Activated CD8-positive, alpha-beta T cell treated with anti-CD3 and anti-CD28 coated beads for 36 hours (primary cell): ENCODE measurements at regions of chr2 and their contacts with region 1.

Region 1: DNA sequence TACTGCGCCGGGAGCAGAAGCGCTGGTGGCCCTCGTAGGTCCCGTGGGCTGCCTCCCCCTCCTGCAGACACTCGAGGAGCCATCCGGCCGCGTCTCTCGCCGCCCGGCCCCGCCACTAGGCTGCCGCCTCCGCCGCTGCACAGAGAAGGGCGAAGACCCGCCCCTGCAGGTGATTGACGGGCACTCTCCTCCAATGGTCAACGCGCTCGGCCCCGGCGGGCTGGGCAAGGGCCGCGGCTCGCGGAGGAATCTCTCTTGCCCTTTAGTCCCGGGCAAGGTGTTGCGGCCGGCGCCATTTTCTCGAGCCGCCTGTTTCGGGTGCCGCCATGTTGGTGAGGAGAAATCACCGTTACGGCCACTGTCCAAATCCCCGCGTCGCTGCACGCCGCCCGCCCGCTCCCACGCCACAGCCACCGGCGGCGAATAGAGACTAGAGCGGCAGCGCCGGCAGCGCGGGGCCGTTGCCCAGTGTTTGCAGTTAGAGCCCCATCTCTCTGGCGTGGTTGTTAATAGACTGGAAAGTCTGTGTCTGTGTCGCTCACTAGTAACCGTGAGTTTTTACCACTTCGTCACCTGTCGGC is at the start of gene ZC3H6:
- DNase-seq: peak; percentile 99
- ATAC-seq: peak; percentile 98
- H3K4me3 Mint-ChIP-seq: peak within 1 kb of the TSS; percentile 88
- H3K27ac Mint-ChIP-seq: peak within 1 kb of the TSS; percentile 98
- H3K4me1 Mint-ChIP-seq: peaks cover 20% of the 10 kb centered on the region
- H3K27me3 Mint-ChIP-seq: no peaks in the 10 kb centered on the region
- CTCF ChIP-seq: no peak
- total RNA-seq, gene ZC3H6: 16.9 to 17.6 TPM

Region 2: GRCh38 chr2:111897924-111898702 is 377.3 kb before region 1 on chr2 and contains the start of gene MERTK:
- CTCF ChIA-PET with region 1: no interaction called
- POLR2A ChIA-PET with region 1: no interaction called
- intact Hi-C with region 1: no loop called
- DNase-seq: peak; percentile 64
- ATAC-seq: peak; percentile 92
- H3K4me3 Mint-ChIP-seq: peak within 1 kb of the TSS; percentile 77
- H3K27ac Mint-ChIP-seq: no peak within 1 kb of the TSS
- H3K4me1 Mint-ChIP-seq: peaks cover 11% of the 10 kb centered on the region
- H3K27me3 Mint-ChIP-seq: peaks cover 45% of the 10 kb centered on the region
- CTCF ChIP-seq: peak; percentile 49
- total RNA-seq, gene MERTK: 0.43 to 0.70 TPM

Region 3: DNA sequence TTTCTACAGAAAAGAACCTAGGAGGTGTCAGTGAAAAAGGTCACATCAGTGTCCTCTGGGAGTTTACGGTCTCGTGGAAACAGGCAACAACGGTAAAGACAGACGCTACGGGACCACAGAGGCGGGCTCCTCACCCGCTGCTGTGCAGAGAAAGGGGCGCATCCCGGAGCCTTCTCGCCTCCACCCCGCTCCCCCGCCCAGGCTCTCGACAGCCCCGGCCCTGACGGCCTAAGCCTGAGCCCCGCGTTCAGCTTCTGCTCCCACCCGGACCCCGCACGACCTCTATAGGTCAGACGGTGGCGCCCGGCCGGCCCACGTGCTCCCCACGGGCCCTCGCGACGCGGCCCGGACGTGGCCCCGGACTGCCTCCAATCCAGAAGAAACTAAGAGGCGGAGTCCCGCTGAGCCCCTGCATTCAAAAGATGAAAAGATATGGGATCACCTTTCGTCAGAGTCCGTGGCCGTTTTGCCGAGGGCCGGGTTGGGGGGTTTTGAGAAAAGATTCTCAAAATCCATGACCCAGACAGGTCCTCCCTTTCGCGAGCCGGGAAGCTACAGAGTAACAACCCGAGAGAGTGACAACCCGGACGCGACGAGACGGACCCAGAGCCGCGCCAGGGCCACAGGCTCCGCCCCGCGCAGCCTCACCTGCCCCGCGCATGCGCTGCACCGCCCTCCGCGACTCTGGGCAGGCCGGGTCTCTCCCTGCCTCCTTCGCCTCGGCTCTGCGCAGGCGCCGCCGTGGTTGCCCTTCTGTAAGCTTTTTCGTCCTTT is 20.7 kb before region 1 on chr2 and contains the start of gene ZC3H8:
- CTCF ChIA-PET with region 1: interaction called, 11 read pairs
- POLR2A ChIA-PET with region 1: interaction called, 14 read pairs
- intact Hi-C with region 1: no loop called
- DNase-seq: peak; percentile 96
- ATAC-seq: peak; percentile 94
- H3K4me3 Mint-ChIP-seq: no peak within 1 kb of the TSS
- H3K27ac Mint-ChIP-seq: peak within 1 kb of the TSS; percentile 93
- H3K4me1 Mint-ChIP-seq: peaks cover 31% of the 10 kb centered on the region
- H3K27me3 Mint-ChIP-seq: no peaks in the 10 kb centered on the region
- CTCF ChIP-seq: no peak
- total RNA-seq, gene ZC3H8: 16.7 to 22.1 TPM

Region 4: DNA sequence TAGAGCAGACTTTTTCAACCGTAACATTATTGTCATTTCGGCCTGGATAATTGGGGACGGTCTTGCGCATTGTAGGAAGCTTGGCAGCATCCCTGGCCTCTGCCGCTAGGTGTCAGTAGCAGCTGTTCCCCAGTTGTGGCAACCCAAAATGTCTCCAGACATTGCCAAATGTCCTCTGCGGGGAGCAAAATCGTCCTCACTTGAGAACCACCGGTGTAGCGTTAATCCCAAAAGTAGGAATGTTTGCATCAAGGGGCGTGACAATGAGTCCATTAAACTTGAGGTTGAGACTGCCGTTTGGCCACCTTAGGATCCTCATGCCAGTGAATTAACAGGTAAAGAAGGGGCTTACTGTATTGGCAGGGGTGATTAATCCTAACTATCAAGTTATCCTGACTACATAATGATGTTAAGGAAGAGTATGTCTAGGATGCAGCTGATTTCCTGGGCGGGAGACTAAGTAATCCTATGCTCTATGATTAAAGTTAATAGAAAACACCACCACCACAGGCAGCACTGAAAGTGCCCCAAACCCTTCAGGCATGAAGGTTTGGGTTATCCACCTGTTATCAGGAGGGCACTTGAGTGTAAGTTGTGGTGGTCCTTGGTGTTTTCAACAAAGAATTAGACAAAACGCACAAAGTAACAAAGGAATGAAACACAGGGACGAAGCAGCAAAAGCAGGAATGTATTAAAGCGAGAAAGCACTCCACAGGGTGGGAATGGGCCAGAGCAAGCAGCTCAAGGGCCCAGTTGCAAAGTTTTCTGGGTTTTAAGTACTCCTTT is 15.7 kb before region 1 on chr2:
- CTCF ChIA-PET with region 1: interaction called, 11 read pairs
- POLR2A ChIA-PET with region 1: interaction called, 14 read pairs
- intact Hi-C with region 1: no loop called
- DNase-seq: peak; percentile 92
- ATAC-seq: peak; percentile 48
- H3K4me3 Mint-ChIP-seq: peak overlapping the region; percentile 55
- H3K27ac Mint-ChIP-seq: peak overlapping the region; percentile 58
- H3K4me1 Mint-ChIP-seq: peaks cover 21% of the 10 kb centered on the region
- H3K27me3 Mint-ChIP-seq: peaks cover 1% of the 10 kb centered on the region
- CTCF ChIP-seq: peak; percentile 92

Region 5: DNA sequence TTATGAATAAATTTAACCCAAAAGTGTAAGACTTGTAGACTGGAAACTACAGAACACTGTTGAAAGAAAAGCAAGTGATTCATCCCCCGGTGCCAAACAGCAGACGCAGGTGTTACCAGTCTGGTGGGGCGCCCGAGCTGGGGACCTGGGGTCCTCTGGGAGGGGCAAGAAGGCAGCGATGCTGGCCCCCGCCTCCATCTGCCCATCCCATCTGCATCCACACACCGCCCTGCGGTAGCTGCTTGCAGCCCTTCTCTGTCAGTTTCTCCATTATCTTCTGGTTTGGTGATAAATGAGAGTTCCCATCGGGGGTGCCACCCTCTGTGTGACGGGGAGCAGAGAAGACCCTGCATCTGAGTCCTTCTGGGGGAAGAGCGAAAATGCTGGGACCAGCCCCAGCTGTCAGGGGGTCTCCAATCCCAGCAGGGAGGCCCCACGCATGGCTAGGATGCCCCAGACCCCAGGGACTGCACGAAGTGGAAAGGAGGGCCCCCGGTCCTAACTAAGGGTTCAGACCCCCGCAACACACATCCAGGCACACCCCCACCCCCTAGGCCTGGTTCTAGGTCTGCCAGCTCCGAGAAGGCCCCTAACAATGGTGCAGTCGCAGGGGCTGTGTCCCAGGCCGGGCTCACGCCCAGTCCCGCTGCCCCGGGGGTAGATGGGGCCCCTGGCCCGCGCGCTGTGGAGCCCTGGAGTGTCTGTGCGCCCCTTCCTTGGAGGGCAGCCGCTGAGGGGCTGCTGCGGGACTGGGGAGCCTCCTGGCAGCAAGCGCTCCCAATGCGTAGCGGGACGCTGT is 158.7 kb after region 1 on chr2:
- CTCF ChIA-PET with region 1: no interaction called
- POLR2A ChIA-PET with region 1: no interaction called
- intact Hi-C with region 1: loop called (anchors 5 kb)
- DNase-seq: peak; percentile 4
- ATAC-seq: no peak
- H3K4me3 Mint-ChIP-seq: no peak overlapping the region
- H3K27ac Mint-ChIP-seq: no peak overlapping the region
- H3K4me1 Mint-ChIP-seq: peaks cover 13% of the 10 kb centered on the region
- H3K27me3 Mint-ChIP-seq: peaks cover 3% of the 10 kb centered on the region
- CTCF ChIP-seq: no peak

Region 6: GRCh38 chr2:112584134-112584890 is 308.9 kb after region 1 on chr2 and contains the start of gene CHCHD5:
- CTCF ChIA-PET with region 1: no interaction called
- POLR2A ChIA-PET with region 1: interaction called, 3 read pairs
- intact Hi-C with region 1: loop called (anchors 5 kb)
- DNase-seq: peak; percentile 98
- ATAC-seq: peak; percentile 88
- H3K4me3 Mint-ChIP-seq: peak within 1 kb of the TSS; percentile 93
- H3K27ac Mint-ChIP-seq: peak within 1 kb of the TSS; percentile 99
- H3K4me1 Mint-ChIP-seq: peaks cover 31% of the 10 kb centered on the region
- H3K27me3 Mint-ChIP-seq: no peaks in the 10 kb centered on the region
- CTCF ChIP-seq: no peak
- total RNA-seq, gene CHCHD5: 34.8 to 37.5 TPM